Right ventricle myocardium superior (tissue), 1 donor: ENCODE measurements at regions of chr14 and their contacts with region 1.

Region 1: DNA sequence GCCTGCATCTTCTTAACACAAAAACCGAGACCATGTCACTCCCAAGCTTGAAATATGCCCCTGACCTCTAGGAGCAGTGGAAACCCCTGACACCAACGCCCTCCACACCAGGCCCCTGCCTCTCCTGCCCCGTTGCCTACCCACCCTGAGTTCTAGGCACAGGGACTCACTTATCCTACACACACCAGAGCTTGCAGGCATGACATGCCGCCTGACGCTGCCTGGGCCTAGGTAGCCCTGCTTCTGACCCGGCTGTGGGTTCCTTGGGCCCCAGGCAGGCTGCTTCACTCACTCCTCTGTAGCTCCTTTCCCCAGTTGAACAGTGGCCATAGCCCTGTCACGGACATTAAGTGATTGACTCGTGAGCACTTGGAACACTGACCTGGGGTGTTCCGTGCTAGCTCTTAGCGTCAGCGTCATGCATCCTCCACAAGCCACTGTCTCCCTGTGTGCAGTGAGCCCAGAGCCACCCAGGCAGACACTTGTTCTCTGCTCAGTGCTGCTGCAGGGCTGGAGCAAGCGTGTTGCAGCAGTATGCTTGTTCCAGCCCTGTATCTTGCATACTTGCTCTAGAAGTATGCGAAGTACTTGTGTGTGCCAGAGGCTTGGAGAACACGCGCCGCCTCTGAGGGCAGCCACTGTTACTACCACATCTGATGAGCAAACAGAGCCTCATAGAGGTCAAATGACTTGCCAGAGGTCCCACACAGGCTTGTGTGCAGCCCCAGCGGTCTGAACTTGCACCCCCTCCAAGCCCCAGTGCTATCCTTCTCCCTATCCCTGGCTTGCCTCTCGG is 15.6 kb downstream of the OTUB2 start:
- DNase-seq: peak; percentile 80
- ATAC-seq: peak; percentile 86

Region 2: GRCh38 chr14:94175011-94175745 is 133.4 kb after region 1 on chr14:
- intact Hi-C with region 1: loop called (anchors 5 kb)
- DNase-seq: peak; percentile 44
- ATAC-seq: no peak

Region 3: GRCh38 chr14:94203473-94204210 is 161.9 kb after region 1 on chr14:
- intact Hi-C with region 1: no loop called
- DNase-seq: no peak
- ATAC-seq: no peak